ENCODE measurements at regions of chr16 and their contacts with region 1.

Region 1: DNA sequence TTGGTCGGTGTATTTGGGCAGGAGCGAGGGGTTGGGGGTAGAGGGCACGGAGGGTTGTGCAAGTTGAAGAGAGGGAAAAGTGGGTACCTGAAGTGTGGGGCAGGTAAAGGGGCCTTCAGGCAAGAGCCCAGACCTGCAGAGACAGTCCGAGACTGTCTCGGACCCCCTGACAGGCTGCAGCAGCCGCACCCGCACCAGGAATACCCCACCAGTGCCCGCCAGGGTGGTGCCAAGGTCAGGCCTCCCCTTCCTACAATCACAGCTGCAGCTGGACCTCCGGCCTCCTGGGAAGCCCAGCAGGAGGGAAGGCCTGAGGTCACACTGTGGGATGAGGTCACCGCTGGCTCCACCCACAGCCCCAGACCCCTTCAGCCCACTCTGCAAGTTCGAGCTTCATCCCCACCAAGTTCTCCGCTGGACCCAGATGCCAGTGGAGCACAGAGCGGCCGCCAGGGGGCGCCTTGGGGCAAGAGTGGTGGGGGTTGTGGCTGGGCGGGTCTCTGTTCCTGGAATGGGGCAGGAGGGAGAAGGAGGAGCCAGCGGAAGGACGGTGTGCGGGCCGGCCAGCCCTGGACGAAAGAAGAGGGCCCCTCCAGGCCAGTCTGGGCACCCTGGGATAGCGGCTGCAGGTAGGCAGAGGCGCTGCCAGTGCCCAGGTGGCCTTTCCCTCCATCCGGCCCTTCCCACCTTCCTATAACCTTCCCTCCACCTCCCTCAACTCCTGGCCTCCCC is at the start of gene HSD3B7:
- DNase-seq: peak; percentile 55 to 90 (median 78)
- ATAC-seq: peak; percentile 85
- H3K4me3 ChIP-seq: no peak within 1 kb of the TSS
- H3K4me3 Mint-ChIP-seq: no peak within 1 kb of the TSS
- H3K27ac ChIP-seq: no peak within 1 kb of the TSS
- H3K27ac Mint-ChIP-seq: no peak within 1 kb of the TSS
- H3K4me1 ChIP-seq: peaks cover 3% of the 10 kb centered on the region
- H3K4me1 Mint-ChIP-seq: peaks cover 4% of the 10 kb centered on the region
- H3K27me3 ChIP-seq: no peaks in the 10 kb centered on the region
- H3K27me3 Mint-ChIP-seq: no peaks in the 10 kb centered on the region
- CTCF ChIP-seq: peak; percentile 77
- total RNA-seq, gene HSD3B7: 0.19 to 0.25 TPM

Region 2: DNA sequence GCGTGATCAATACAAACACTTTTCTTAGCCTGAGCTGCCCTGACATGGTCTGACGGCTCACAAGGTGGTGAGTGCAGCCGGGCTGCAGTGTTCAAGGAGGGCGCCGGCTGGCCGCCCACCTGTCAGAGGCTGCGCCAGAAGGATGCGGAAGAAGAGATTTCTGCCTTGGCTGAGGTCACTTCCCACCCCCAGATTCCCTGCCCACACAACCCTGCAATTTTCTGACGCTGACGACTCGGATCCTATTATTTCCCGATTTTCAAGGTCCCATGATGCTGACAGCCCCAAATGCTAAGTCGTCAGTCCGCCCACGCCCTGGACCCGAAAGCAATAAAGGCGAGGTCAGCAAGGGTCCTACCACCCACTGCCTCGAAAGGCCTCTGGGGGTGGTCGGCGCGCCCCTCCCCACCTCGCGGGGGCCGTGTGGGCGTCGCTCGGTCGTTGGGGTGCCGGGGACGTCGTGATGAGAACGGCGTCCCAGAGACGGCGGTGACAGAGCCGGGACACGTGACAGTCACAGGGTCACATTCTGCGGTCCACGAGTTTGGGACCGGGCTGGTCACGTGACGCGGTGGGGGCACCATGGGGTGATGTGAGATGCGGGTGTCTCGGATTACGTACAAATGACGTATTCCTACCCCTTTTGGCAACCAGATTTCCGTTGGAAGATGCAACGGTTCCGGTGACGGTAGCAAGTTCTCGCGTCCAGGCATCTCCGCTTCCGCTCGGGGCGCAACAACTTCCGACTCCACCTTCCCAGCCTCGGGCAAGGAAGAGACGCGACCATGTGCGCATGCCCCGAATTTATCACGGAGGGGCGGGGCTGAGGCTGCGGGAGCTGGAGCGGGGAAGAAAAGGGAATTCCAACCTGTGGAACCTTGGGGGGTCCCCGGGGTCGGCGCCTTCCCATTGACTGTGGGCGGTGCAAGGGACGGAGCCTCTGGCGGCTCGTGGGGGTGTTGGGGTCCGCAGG is 48.2 kb after region 1 on chr16 and contains the start of gene STX4:
- CTCF ChIA-PET with region 1: interaction called, 3 read pairs
- POLR2A ChIA-PET with region 1: no interaction called
- intact Hi-C with region 1: loop called in 1 of 2 experiments (anchors 1 kb)
- DNase-seq: peak; percentile 93 to 100 (median 97)
- ATAC-seq: peak; percentile 73
- H3K4me3 ChIP-seq: peak within 1 kb of the TSS; percentile 84 to 88
- H3K4me3 Mint-ChIP-seq: peak within 1 kb of the TSS; percentile 98
- H3K27ac ChIP-seq: peak within 1 kb of the TSS; percentile 98 to 99
- H3K27ac Mint-ChIP-seq: peak within 1 kb of the TSS; percentile 99
- H3K4me1 ChIP-seq: peaks cover 18% of the 10 kb centered on the region
- H3K4me1 Mint-ChIP-seq: peaks cover 28% of the 10 kb centered on the region
- H3K27me3 ChIP-seq: no peaks in the 10 kb centered on the region
- H3K27me3 Mint-ChIP-seq: no peaks in the 10 kb centered on the region
- CTCF ChIP-seq: no peak
- total RNA-seq, gene STX4: 63.8 to 69.9 TPM

Region 3: GRCh38 chr16:31099860-31100638 is 115.2 kb after region 1 on chr16:
- CTCF ChIA-PET with region 1: interaction called, 26 read pairs
- POLR2A ChIA-PET with region 1: no interaction called
- intact Hi-C with region 1: loop called (anchors 1 kb)
- DNase-seq: no peak
- ATAC-seq: no peak
- H3K4me3 ChIP-seq: no peak overlapping the region
- H3K4me3 Mint-ChIP-seq: no peak overlapping the region
- H3K27ac ChIP-seq: no peak overlapping the region
- H3K27ac Mint-ChIP-seq: no peak overlapping the region
- H3K4me1 ChIP-seq: peaks cover 8% of the 10 kb centered on the region
- H3K4me1 Mint-ChIP-seq: peaks cover 7% of the 10 kb centered on the region
- H3K27me3 ChIP-seq: no peaks in the 10 kb centered on the region
- H3K27me3 Mint-ChIP-seq: no peaks in the 10 kb centered on the region
- CTCF ChIP-seq: no peak

Region 4: GRCh38 chr16:31440516-31441184 is 455.8 kb after region 1 on chr16:
- CTCF ChIA-PET with region 1: interaction called, 57 read pairs
- POLR2A ChIA-PET with region 1: no interaction called
- intact Hi-C with region 1: loop called in 1 of 2 experiments (anchors 1 kb)
- DNase-seq: no peak
- ATAC-seq: no peak
- H3K4me3 ChIP-seq: no peak overlapping the region
- H3K4me3 Mint-ChIP-seq: no peak overlapping the region
- H3K27ac ChIP-seq: no peak overlapping the region
- H3K27ac Mint-ChIP-seq: no peak overlapping the region
- H3K4me1 ChIP-seq: peaks cover 4% of the 10 kb centered on the region
- H3K4me1 Mint-ChIP-seq: peaks cover 6% of the 10 kb centered on the region
- H3K27me3 ChIP-seq: no peaks in the 10 kb centered on the region
- H3K27me3 Mint-ChIP-seq: no peaks in the 10 kb centered on the region
- CTCF ChIP-seq: no peak

Region 5: GRCh38 chr16:31868691-31869167 is 883.9 kb after region 1 on chr16:
- CTCF ChIA-PET with region 1: interaction called, 9 read pairs
- POLR2A ChIA-PET with region 1: no interaction called
- intact Hi-C with region 1: loop called in 1 of 2 experiments (anchors 1 kb)
- DNase-seq: peak; percentile 60 to 88 (median 82)
- ATAC-seq: peak; percentile 20
- H3K4me3 ChIP-seq: peak overlapping the region; percentile 33 to 48
- H3K4me3 Mint-ChIP-seq: peak overlapping the region; percentile 66
- H3K27ac ChIP-seq: peak overlapping the region; percentile 18 to 79
- H3K27ac Mint-ChIP-seq: peak overlapping the region; percentile 88
- H3K4me1 ChIP-seq: peaks cover 31% of the 10 kb centered on the region
- H3K4me1 Mint-ChIP-seq: peaks cover 47% of the 10 kb centered on the region
- H3K27me3 ChIP-seq: no peaks in the 10 kb centered on the region
- H3K27me3 Mint-ChIP-seq: no peaks in the 10 kb centered on the region
- CTCF ChIP-seq: peak; percentile 96

Measured in CD8-positive, alpha-beta T cell (primary cell).